Activated CD4-positive, alpha-beta memory T cell treated with anti-CD3 and anti-CD28 coated beads for 36 hours (primary cell): ENCODE measurements at regions of chr3 and their contacts with region 1.

Region 1: DNA sequence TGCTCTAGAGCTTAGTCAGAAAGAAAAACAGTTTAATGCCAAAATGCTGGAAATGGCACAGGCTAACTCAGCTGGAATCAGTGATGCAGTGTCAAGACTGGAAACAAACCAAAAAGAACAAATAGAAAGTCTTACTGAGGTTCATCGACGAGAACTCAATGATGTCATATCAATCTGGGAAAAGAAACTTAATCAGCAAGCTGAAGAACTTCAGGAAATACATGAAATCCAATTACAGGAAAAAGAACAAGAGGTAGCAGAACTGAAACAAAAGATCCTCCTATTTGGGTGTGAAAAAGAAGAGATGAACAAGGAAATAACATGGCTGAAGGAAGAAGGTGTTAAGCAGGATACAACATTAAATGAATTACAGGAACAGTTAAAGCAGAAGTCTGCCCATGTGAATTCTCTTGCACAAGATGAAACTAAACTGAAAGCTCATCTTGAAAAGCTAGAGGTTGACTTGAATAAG is 150.5 kb upstream of the LRRFIP2 start:
- DNase-seq: no peak
- H3K4me3 Mint-ChIP-seq: no peak overlapping the region
- H3K27ac Mint-ChIP-seq: peak overlapping the region; percentile 73
- H3K4me1 Mint-ChIP-seq: peaks cover 43% of the 10 kb centered on the region
- H3K27me3 Mint-ChIP-seq: no peaks in the 10 kb centered on the region

Region 2: GRCh38 chr3:36911990-36912804 is 412.7 kb before region 1 on chr3:
- CTCF ChIA-PET with region 1: no interaction called
- POLR2A ChIA-PET with region 1: no interaction called
- intact Hi-C with region 1: loop called (anchors 10 kb)
- DNase-seq: peak; percentile 47
- H3K4me3 Mint-ChIP-seq: peak overlapping the region; percentile 59
- H3K27ac Mint-ChIP-seq: peak overlapping the region; percentile 81
- H3K4me1 Mint-ChIP-seq: peaks cover 41% of the 10 kb centered on the region
- H3K27me3 Mint-ChIP-seq: no peaks in the 10 kb centered on the region

Region 3: DNA sequence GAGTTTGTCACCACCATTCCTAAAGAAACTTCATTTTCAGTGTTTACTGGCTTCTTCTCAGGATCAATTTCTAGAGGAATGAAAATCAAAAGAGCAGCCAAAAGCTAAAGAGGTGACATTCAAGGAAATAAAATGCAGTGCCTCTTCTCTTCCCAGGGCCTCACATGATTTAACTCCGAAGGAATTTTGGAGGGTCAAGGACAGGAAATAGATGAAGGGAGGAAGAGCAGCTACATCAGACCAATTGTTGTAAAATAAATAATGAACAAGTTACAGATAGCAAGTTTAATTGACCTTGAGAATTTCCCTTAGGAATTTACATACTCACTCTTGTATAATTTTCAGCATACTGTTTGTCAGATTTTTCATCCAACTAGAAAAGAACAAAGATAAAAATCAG is 228.6 kb before region 1 on chr3:
- CTCF ChIA-PET with region 1: no interaction called
- POLR2A ChIA-PET with region 1: no interaction called
- intact Hi-C with region 1: no loop called
- DNase-seq: no peak
- H3K4me3 Mint-ChIP-seq: no peak overlapping the region
- H3K27ac Mint-ChIP-seq: no peak overlapping the region
- H3K4me1 Mint-ChIP-seq: no peaks in the 10 kb centered on the region
- H3K27me3 Mint-ChIP-seq: no peaks in the 10 kb centered on the region

Region 4: DNA sequence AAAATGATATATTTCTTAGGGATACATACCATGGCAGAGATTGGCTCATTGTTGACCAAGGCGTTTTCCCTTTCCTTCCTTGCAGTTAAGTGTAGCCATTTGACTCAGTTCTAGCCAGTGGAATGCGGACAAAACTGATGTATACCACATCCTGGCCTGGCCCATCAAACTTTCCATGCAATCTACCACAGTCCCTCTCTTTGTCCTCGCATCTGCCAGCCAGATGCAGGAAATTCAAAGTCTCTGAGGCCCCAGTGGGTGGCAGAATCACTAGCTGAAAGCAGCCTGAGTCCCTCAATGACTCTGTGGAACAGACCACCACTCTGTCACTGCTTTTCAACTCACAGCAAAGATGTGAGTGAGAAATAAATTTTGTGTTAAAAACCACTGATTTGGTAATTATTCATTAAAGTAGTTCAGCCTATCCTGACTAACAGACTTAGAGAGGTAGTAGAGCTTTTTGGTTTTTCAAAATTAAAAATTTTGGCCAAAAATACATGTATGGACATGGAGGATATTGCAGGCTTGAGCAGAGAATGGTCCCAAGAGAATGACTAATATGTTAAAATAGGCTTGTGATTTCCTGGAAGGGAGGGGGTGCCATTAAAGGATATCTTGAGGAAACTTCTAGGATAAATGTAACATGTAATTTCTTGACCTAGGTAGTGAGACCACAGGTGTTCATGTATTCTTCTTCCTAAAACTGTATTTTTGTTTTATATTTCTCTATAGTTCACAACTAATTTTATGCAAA is 161.4 kb before region 1 on chr3:
- CTCF ChIA-PET with region 1: no interaction called
- POLR2A ChIA-PET with region 1: no interaction called
- intact Hi-C with region 1: loop called (anchors 5 kb)
- DNase-seq: peak; percentile 72
- H3K4me3 Mint-ChIP-seq: no peak overlapping the region
- H3K27ac Mint-ChIP-seq: peak overlapping the region; percentile 42
- H3K4me1 Mint-ChIP-seq: peaks cover 29% of the 10 kb centered on the region
- H3K27me3 Mint-ChIP-seq: no peaks in the 10 kb centered on the region

Region 5: GRCh38 chr3:37174532-37175126 is 150.3 kb before region 1 on chr3 and contains the start of gene LRRFIP2:
- CTCF ChIA-PET with region 1: no interaction called
- POLR2A ChIA-PET with region 1: no interaction called
- intact Hi-C with region 1: loop called (anchors 1 kb)
- DNase-seq: peak; percentile 41
- H3K4me3 Mint-ChIP-seq: peak within 1 kb of the TSS; percentile 83
- H3K27ac Mint-ChIP-seq: peak within 1 kb of the TSS; percentile 80
- H3K4me1 Mint-ChIP-seq: peaks cover 41% of the 10 kb centered on the region
- H3K27me3 Mint-ChIP-seq: no peaks in the 10 kb centered on the region
- total RNA-seq, gene LRRFIP2: 25.9 to 30.7 TPM

Region 6: GRCh38 chr3:37287776-37288175 is 37.1 kb before region 1 on chr3:
- CTCF ChIA-PET with region 1: no interaction called
- POLR2A ChIA-PET with region 1: no interaction called
- intact Hi-C with region 1: loop called (anchors 5 kb)
- DNase-seq: no peak
- H3K4me3 Mint-ChIP-seq: no peak overlapping the region
- H3K27ac Mint-ChIP-seq: no peak overlapping the region
- H3K4me1 Mint-ChIP-seq: peaks cover 18% of the 10 kb centered on the region
- H3K27me3 Mint-ChIP-seq: no peaks in the 10 kb centered on the region

Region 7: DNA sequence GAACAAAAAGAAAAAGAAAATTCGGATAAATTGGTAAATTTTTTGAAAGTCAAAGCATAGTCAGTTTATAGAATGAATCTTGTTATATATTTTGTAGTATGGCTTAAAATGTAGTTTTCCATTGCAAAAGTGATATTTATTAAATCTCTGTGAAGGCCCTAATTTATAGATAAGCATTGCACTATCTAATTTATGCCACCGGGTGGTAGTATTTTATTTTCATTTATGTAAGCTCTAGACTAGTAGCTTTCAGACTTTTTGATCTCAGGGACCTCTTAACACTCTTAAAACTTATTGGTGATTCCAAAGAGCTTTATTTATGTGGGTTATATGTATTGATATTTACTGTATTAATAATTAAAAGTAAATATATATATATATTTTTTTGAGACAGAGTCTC is 16.6 kb before region 1 on chr3:
- CTCF ChIA-PET with region 1: interaction called, 10 read pairs
- POLR2A ChIA-PET with region 1: no interaction called
- intact Hi-C with region 1: no loop called
- DNase-seq: no peak
- H3K4me3 Mint-ChIP-seq: no peak overlapping the region
- H3K27ac Mint-ChIP-seq: no peak overlapping the region
- H3K4me1 Mint-ChIP-seq: peaks cover 15% of the 10 kb centered on the region
- H3K27me3 Mint-ChIP-seq: no peaks in the 10 kb centered on the region

Region 8: GRCh38 chr3:37453393-37454389 is 128.8 kb after region 1 on chr3:
- CTCF ChIA-PET with region 1: no interaction called
- POLR2A ChIA-PET with region 1: no interaction called
- intact Hi-C with region 1: no loop called
- DNase-seq: no peak
- H3K4me3 Mint-ChIP-seq: no peak overlapping the region
- H3K27ac Mint-ChIP-seq: no peak overlapping the region
- H3K4me1 Mint-ChIP-seq: peaks cover 12% of the 10 kb centered on the region
- H3K27me3 Mint-ChIP-seq: peaks cover 58% of the 10 kb centered on the region